ENCODE measurements at regions of chr5 and their contacts with region 1.

Region 1: GRCh38 chr5:119418531-119419116 is 33.7 kb upstream of the HSD17B4 start:
- DNase-seq: no peak
- H3K4me3 ChIP-seq: no peak overlapping the region
- H3K4me3 Mint-ChIP-seq: no peak overlapping the region
- H3K27ac ChIP-seq: no peak overlapping the region
- H3K27ac Mint-ChIP-seq: no peak overlapping the region
- H3K4me1 ChIP-seq: peaks cover 10% of the 10 kb centered on the region
- H3K4me1 Mint-ChIP-seq: peaks cover 3 to 8% (median 6%) of the 10 kb centered on the region in 4 donors
- H3K27me3 ChIP-seq: no peaks in the 10 kb centered on the region
- H3K27me3 Mint-ChIP-seq: peaks cover 0 to 5% of the 10 kb centered on the region in 2 donors

Region 2: GRCh38 chr5:118854819-118855218 is 563.8 kb before region 1 on chr5:
- CTCF ChIA-PET with region 1: no interaction called
- POLR2A ChIA-PET with region 1: no interaction called
- intact Hi-C with region 1: no loop called
- DNase-seq: no peak
- H3K4me3 ChIP-seq: no peak overlapping the region
- H3K4me3 Mint-ChIP-seq: no peak overlapping the region
- H3K27ac ChIP-seq: no peak overlapping the region
- H3K27ac Mint-ChIP-seq: no peak overlapping the region
- H3K4me1 ChIP-seq: no peaks in the 10 kb centered on the region
- H3K4me1 Mint-ChIP-seq: no peaks in the 10 kb centered on the region
- H3K27me3 ChIP-seq: no peaks in the 10 kb centered on the region
- H3K27me3 Mint-ChIP-seq: no peaks in the 10 kb centered on the region

Region 3: DNA sequence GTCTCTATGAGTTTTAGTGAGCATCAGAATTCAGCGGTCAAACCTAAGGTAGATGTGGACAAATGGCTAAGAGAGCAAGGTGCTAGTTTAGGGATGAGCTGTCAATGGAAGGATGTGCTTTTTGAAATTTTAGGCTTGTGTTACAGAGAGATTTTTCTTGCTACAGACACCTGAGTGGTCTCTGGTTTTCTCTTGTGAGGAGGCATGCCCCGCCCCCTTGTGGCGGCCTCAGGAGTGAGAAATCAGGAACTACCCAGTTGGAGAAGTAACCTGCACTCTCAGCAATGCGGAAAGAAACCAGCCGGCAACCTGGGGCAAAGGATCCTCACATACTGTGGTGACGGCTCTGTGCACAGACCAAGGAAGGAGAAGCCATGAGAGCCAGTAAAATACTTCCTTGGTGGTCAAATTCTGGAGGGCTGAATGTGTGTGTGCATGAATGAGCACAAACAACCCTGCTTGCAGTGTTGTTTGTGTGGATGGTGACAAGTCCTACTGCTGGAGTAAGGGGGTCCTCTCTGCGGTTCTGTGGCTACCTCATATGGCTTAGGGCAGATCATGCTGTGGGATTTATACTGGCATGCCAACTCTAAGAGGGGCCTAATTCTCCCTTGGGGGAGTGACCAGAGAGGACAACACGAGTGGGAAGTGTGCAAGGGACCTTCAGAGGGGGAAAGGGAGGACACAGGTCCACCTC is 17.0 kb after region 1 on chr5:
- CTCF ChIA-PET with region 1: interaction called, 33 read pairs
- POLR2A ChIA-PET with region 1: no interaction called
- intact Hi-C with region 1: no loop called
- DNase-seq: peak; percentile 61 to 73 (median 64)
- H3K4me3 ChIP-seq: no peak overlapping the region
- H3K4me3 Mint-ChIP-seq: peak overlapping the region in 1 of 8 donors; percentile 18
- H3K27ac ChIP-seq: no peak overlapping the region
- H3K27ac Mint-ChIP-seq: no peak overlapping the region
- H3K4me1 ChIP-seq: no peaks in the 10 kb centered on the region
- H3K4me1 Mint-ChIP-seq: peaks cover 3 to 8% (median 8%) of the 10 kb centered on the region in 4 donors
- H3K27me3 ChIP-seq: no peaks in the 10 kb centered on the region
- H3K27me3 Mint-ChIP-seq: peaks cover 25 to 37% of the 10 kb centered on the region in 2 donors